ENCODE measurements at regions of chr16 and their contacts with region 1.

Region 1: GRCh38 chr16:73196670-73197069 is 148.7 kb upstream of the ZFHX3 start:
- DNase-seq: no peak
- H3K4me3 ChIP-seq: no peak overlapping the region
- H3K27ac ChIP-seq: no peak overlapping the region
- H3K4me1 ChIP-seq: peaks cover 6% of the 10 kb centered on the region
- H3K27me3 ChIP-seq: no peaks in the 10 kb centered on the region
- CTCF ChIP-seq: peak; percentile 16 to 51 (median 50)
- POLR2A ChIP-seq: no peak

Region 2: GRCh38 chr16:72832621-72833248 is 363.9 kb before region 1 on chr16:
- intact Hi-C with region 1: loop called (anchors 10 kb)
- DNase-seq: peak in 1 of 2 donors; percentile 93
- H3K4me3 ChIP-seq: no peak overlapping the region
- H3K27ac ChIP-seq: no peak overlapping the region
- H3K4me1 ChIP-seq: peaks cover 14% of the 10 kb centered on the region
- H3K27me3 ChIP-seq: no peaks in the 10 kb centered on the region
- CTCF ChIP-seq: peak; percentile 89 to 97 (median 91)
- POLR2A ChIP-seq: no peak

Region 3: DNA sequence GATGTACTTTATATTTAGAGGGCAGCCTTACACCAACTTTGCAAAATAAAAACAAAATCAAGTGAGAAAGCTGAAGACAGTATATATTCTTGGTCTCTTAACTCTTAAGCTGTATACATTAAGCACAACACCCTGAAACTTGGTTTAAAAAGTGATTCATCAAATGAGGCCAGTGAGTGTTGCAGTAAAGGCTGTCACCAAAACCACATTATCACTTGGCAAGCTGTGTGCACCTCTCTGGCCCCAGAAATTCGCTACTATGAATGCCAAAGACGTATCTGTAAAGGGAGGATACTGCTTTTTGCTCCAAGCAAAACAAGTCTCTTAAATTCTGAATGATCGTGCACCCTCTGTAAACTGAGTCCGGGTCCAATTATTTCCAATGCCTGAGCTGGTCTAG is 312.6 kb before region 1 on chr16:
- intact Hi-C with region 1: no loop called
- DNase-seq: no peak
- H3K4me3 ChIP-seq: no peak overlapping the region
- H3K27ac ChIP-seq: no peak overlapping the region
- H3K4me1 ChIP-seq: no peaks in the 10 kb centered on the region
- H3K27me3 ChIP-seq: no peaks in the 10 kb centered on the region
- CTCF ChIP-seq: no peak
- POLR2A ChIP-seq: no peak

Region 4: GRCh38 chr16:73131156-73131862 is 65.4 kb before region 1 on chr16:
- intact Hi-C with region 1: no loop called
- DNase-seq: no peak
- H3K4me3 ChIP-seq: no peak overlapping the region
- H3K27ac ChIP-seq: no peak overlapping the region
- H3K4me1 ChIP-seq: no peaks in the 10 kb centered on the region
- H3K27me3 ChIP-seq: no peaks in the 10 kb centered on the region
- CTCF ChIP-seq: no peak
- POLR2A ChIP-seq: no peak

Region 5: GRCh38 chr16:73254983-73255382 is 58.3 kb after region 1 on chr16:
- intact Hi-C with region 1: no loop called
- DNase-seq: no peak
- H3K4me3 ChIP-seq: no peak overlapping the region
- H3K27ac ChIP-seq: no peak overlapping the region
- H3K4me1 ChIP-seq: no peaks in the 10 kb centered on the region
- H3K27me3 ChIP-seq: no peaks in the 10 kb centered on the region
- CTCF ChIP-seq: no peak
- POLR2A ChIP-seq: no peak